Activated CD4-positive, alpha-beta T cell treated with anti-CD3 and anti-CD28 coated beads for 36 hours (primary cell): ENCODE measurements at regions of chr10 and their contacts with region 1.

Region 1: DNA sequence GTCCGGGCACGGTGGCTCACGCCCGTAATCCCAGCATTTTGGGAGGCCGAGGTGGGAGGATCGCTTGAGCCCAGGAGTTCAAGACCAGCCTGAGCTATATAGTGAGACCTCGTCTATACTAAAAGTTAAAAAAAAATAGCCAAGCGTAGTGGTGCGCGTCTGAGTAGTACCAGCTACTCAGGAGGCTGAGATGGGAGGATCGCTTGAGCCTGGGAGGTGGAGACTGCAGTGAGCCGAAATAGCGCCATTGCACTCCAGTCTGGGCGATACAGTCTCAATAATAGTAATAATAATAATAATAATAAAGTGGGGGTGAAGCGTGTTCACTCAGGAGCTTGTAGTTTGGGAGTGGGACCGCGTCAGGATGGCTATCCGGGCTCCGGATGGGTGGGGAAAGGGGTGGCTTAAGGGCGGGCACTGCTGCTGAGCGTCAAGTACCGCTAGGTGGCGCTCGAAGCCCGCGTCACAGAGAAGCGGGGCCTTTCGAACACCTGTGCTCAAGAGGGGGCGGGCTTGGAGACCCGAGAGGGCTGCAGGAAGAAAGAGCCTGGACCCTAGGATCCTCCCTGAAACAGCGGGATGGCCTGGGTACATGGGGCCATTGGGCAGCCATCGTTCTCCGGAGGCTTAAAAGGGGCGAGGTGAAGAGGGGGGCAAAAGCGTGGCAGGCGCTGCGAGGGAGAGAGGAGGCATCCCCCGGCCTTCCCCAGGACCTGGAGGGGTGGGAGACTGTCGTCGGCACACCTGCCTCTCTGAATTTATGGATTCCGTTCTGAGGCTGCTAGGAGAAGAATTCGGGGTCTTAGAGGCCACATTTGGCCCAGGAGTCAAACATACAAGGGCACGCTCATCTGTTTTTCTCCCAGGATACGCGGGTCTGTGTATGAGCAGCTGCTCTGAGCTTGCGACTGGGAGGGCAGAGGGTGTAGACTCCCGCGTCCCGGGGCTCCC is 14.5 kb downstream of the LBX1 start:
- DNase-seq: peak; percentile 89
- ATAC-seq: peak; percentile 84
- H3K4me3 Mint-ChIP-seq: peak overlapping the region; percentile 68
- H3K27ac Mint-ChIP-seq: no peak overlapping the region
- H3K4me1 Mint-ChIP-seq: peaks cover 28% of the 10 kb centered on the region
- H3K27me3 Mint-ChIP-seq: peaks cover 69% of the 10 kb centered on the region

Region 2: GRCh38 chr10:100826983-100827818 is 387.5 kb before region 1 on chr10:
- CTCF ChIA-PET with region 1: no interaction called
- POLR2A ChIA-PET with region 1: no interaction called
- intact Hi-C with region 1: no loop called
- DNase-seq: peak; percentile 61
- ATAC-seq: peak; percentile 67
- H3K4me3 Mint-ChIP-seq: peak overlapping the region; percentile 63
- H3K27ac Mint-ChIP-seq: no peak overlapping the region
- H3K4me1 Mint-ChIP-seq: peaks cover 24% of the 10 kb centered on the region
- H3K27me3 Mint-ChIP-seq: peaks cover 65% of the 10 kb centered on the region

Region 3: DNA sequence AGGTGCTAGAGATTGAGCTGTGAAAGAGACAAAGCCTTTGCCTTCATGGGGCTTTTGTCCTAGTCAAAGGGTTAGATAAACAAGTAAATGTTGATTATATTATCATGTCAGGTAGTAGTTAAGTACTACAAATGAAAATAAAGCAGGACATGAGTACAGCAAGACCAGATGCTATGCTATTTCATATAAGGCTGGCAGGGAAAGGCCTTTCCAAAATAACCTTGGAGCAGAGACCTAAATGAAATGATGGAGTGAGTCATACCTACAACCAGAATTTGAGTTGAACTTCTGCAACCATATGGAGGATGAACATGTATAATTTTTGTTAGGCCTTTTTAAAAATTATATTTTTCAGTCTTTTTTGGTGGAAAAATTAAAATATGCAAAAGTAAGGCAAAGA is 269.0 kb before region 1 on chr10:
- CTCF ChIA-PET with region 1: no interaction called
- POLR2A ChIA-PET with region 1: no interaction called
- intact Hi-C with region 1: no loop called
- DNase-seq: no peak
- ATAC-seq: no peak
- H3K4me3 Mint-ChIP-seq: no peak overlapping the region
- H3K27ac Mint-ChIP-seq: no peak overlapping the region
- H3K4me1 Mint-ChIP-seq: peaks cover 14% of the 10 kb centered on the region
- H3K27me3 Mint-ChIP-seq: no peaks in the 10 kb centered on the region

Region 4: GRCh38 chr10:101161494-101162299 is 53.0 kb before region 1 on chr10:
- CTCF ChIA-PET with region 1: interaction called, 7 read pairs
- POLR2A ChIA-PET with region 1: no interaction called
- intact Hi-C with region 1: loop called (anchors 1 to 5 kb)
- DNase-seq: peak; percentile 85
- ATAC-seq: peak; percentile 83
- H3K4me3 Mint-ChIP-seq: no peak overlapping the region
- H3K27ac Mint-ChIP-seq: no peak overlapping the region
- H3K4me1 Mint-ChIP-seq: peaks cover 10% of the 10 kb centered on the region
- H3K27me3 Mint-ChIP-seq: peaks cover 54% of the 10 kb centered on the region

Region 5: GRCh38 chr10:101244321-101245050 is 29.8 kb after region 1 on chr10:
- CTCF ChIA-PET with region 1: interaction called, 47 read pairs
- POLR2A ChIA-PET with region 1: no interaction called
- intact Hi-C with region 1: no loop called
- DNase-seq: no peak
- ATAC-seq: no peak
- H3K4me3 Mint-ChIP-seq: no peak overlapping the region
- H3K27ac Mint-ChIP-seq: no peak overlapping the region
- H3K4me1 Mint-ChIP-seq: no peaks in the 10 kb centered on the region
- H3K27me3 Mint-ChIP-seq: peaks cover 42% of the 10 kb centered on the region

Region 6: GRCh38 chr10:101441541-101442455 is 227.1 kb after region 1 on chr10:
- CTCF ChIA-PET with region 1: interaction called, 25 read pairs
- POLR2A ChIA-PET with region 1: no interaction called
- intact Hi-C with region 1: loop called (anchors 1 to 2 kb)
- DNase-seq: peak; percentile 39
- ATAC-seq: peak; percentile 95
- H3K4me3 Mint-ChIP-seq: no peak overlapping the region
- H3K27ac Mint-ChIP-seq: no peak overlapping the region
- H3K4me1 Mint-ChIP-seq: peaks cover 2% of the 10 kb centered on the region
- H3K27me3 Mint-ChIP-seq: no peaks in the 10 kb centered on the region

Region 7: GRCh38 chr10:101569838-101570766 is 355.4 kb after region 1 on chr10:
- CTCF ChIA-PET with region 1: interaction called, 46 read pairs
- POLR2A ChIA-PET with region 1: no interaction called
- intact Hi-C with region 1: loop called (anchors 1 kb)
- DNase-seq: peak; percentile 91
- ATAC-seq: peak; percentile 79
- H3K4me3 Mint-ChIP-seq: peak overlapping the region; percentile 62
- H3K27ac Mint-ChIP-seq: no peak overlapping the region
- H3K4me1 Mint-ChIP-seq: peaks cover 18% of the 10 kb centered on the region
- H3K27me3 Mint-ChIP-seq: peaks cover 40% of the 10 kb centered on the region